ENCODE measurements at regions of chr13 and their contacts with region 1.

Region 1: DNA sequence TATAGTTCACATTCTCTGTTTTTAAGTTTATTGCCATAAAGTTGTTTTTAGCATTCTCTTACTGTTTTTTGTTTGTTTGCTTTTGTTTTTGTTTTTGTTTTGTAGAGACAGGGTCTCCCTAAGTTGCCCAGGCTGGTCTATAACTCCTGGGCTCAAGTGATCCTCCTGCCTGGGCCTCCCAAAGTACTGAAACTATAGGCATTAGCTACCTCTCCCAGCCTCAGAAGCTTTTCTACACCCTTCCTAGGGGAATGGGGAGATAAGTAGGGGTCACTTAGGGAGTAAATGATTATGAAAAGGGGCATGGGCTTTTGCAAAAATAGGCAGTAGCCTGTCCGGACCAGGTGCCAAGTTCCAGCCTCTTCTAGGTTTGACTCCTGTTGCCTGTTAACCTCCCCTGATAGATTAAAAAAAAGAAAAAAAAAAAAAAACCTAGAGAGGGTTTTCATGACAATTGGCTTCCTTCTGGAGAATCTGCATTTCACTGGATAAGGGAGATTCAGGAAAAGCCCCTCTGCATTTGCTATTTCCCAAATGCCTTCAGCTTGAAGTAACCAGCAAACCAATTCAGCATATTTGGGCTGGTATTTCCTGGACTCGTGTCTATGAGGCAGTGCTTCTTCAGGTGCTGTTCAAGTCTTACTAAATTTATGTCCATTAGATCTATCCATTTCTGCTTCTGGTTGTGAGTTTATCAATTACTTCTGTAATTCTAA is 216.8 kb downstream of the TM9SF2 start:
- DNase-seq: no peak
- H3K4me3 ChIP-seq: no peak overlapping the region
- CTCF ChIP-seq: no peak

Region 2: DNA sequence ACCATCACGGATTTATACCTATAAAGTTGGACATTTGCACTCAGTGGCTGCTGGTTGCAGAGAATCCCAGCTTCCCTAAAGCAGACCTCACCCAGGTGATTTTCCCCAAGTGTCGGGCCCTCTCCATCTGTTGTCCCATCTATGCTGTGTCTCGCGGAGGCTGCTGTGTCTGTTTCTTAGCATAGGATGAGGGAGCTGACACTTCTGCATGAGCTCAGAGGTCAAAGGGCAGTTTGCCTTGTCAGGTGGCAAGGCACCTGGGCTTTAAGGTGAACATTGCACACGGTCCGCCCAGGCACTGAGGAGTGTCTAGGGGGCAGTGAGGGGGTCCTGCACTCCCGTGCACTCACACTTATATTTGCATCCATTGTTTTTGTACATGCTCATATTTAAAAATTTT is 101.8 kb after region 1 on chr13:
- in situ Hi-C with region 1: loop called (anchors 5 kb)
- DNase-seq: no peak
- H3K4me3 ChIP-seq: no peak overlapping the region
- CTCF ChIP-seq: no peak